ENCODE measurements at regions of chr4 and their contacts with region 1.

Region 1: GRCh38 chr4:39527273-39528060 is at the start of gene UGDH:
- DNase-seq: peak; percentile 91 to 95
- ATAC-seq: peak; percentile 98 to 100 (median 99)
- H3K4me3 ChIP-seq: peak within 1 kb of the TSS; percentile 93
- H3K4me3 Mint-ChIP-seq: peak within 1 kb of the TSS; percentile 96
- H3K27ac ChIP-seq: peak within 1 kb of the TSS; percentile 68
- H3K27ac Mint-ChIP-seq: peak within 1 kb of the TSS; percentile 78 to 92
- H3K4me1 ChIP-seq: peaks cover 18% of the 10 kb centered on the region
- H3K4me1 Mint-ChIP-seq: peaks cover 13 to 20% of the 10 kb centered on the region in 2 donors
- H3K27me3 ChIP-seq: no peaks in the 10 kb centered on the region
- H3K27me3 Mint-ChIP-seq: no peaks in the 10 kb centered on the region
- CTCF ChIP-seq: no peak
- total RNA-seq, gene UGDH: 12.2 to 14.8 (median 13.6) TPM

Region 2: GRCh38 chr4:37826295-37827029 is 1701.0 kb before region 1 on chr4 and contains the start of gene PGM2:
- intact Hi-C with region 1: no loop called
- DNase-seq: peak; percentile 85 to 93
- ATAC-seq: peak; percentile 97 to 99 (median 99)
- H3K4me3 ChIP-seq: peak within 1 kb of the TSS; percentile 95
- H3K4me3 Mint-ChIP-seq: peak within 1 kb of the TSS; percentile 95
- H3K27ac ChIP-seq: peak within 1 kb of the TSS; percentile 69
- H3K27ac Mint-ChIP-seq: peak within 1 kb of the TSS; percentile 84 to 93
- H3K4me1 ChIP-seq: peaks cover 14% of the 10 kb centered on the region
- H3K4me1 Mint-ChIP-seq: peaks cover 40 to 46% of the 10 kb centered on the region in 2 donors
- H3K27me3 ChIP-seq: no peaks in the 10 kb centered on the region
- H3K27me3 Mint-ChIP-seq: no peaks in the 10 kb centered on the region
- CTCF ChIP-seq: no peak
- total RNA-seq, gene PGM2: 18.7 to 31.9 (median 27.1) TPM

Region 3: DNA sequence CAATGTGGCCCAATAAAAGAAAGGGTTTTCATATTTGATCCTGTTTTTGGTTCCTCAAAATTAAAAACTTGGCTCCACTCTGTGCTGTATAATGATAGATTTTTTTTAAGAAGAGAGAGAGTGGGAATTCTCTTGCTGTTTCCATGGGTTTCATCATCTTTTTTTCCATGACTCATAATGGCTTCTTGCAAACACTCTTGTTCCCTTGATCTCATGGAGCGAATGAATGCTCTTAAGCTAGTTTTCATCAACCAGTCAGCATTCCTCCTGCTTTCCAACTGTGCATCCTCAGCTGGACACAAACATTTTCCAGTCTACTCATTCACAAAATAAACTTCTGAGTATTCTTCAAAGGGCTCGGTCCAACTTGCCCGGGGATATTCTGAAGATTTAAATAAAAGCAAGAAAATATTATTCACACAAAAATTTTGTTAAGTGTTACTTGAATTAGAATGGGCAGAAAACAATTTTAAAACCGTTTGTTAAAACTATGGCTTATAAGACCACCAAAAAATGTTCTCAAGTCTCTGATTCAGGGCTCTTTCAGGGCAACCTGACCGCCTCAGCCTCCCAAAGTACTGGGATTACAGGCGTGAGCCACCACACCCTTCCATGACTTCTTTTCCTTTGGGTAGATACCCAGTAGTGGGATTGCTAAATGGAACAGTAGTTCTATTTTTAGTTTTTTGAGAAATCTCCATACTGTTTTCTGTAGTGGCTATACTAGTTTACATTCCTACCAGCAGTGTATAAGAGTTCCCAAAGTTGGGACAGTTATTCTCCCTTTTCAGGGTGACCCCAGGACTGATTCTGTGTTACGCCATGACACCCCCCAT is 560.0 kb before region 1 on chr4:
- intact Hi-C with region 1: no loop called
- DNase-seq: no peak
- ATAC-seq: no peak
- H3K4me3 ChIP-seq: no peak overlapping the region
- H3K4me3 Mint-ChIP-seq: no peak overlapping the region
- H3K27ac ChIP-seq: no peak overlapping the region
- H3K27ac Mint-ChIP-seq: no peak overlapping the region
- H3K4me1 ChIP-seq: no peaks in the 10 kb centered on the region
- H3K4me1 Mint-ChIP-seq: peaks cover 0 to 4% of the 10 kb centered on the region in 2 donors
- H3K27me3 ChIP-seq: no peaks in the 10 kb centered on the region
- H3K27me3 Mint-ChIP-seq: no peaks in the 10 kb centered on the region
- CTCF ChIP-seq: no peak

Region 4: DNA sequence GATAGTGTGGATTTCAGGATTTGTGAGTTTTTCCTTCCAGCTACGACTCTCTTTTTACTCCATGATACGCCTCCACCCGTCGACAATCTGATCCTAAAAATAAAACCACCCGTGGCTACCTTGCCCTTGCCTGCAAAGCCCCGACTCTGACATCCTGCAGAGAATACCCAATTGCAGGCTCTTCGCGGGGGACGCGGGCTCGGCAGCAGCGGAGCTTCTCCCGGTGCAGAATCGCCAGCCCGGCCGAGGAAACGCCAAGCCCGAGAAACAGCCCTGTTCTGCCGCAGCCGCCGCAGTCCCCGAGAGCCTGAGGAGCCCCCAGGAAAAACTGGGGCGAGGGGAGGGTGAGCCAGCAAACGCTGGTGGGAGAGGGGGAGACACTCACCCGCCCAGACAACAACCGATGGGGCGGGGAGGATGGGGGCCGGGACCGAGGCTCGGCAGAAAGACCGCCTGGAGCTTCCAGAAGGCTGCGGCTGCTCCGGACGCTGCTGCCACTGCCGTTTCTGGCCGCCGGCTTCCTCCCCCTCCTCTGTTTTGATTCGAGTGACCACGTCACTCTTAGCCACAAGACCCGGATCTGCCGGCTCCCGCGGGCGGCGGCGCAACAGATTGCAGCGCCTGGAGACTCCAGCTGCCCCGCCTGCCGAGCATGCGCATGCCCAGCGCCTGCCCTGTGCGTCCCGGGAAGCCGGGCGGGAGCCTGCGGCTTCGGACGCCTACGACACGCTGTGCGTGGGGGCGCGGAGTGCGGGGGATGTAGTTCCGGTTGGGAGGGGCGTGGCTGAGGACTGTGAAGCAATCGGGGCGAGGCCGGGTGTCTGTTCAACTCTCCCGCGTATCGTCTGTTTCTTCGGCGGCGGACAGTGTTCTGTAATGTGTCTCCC is 111.1 kb after region 1 on chr4 and contains the start of gene SMIM14:
- intact Hi-C with region 1: loop called (anchors 1 kb)
- DNase-seq: peak; percentile 80 to 93
- ATAC-seq: peak; percentile 76 to 90 (median 80)
- H3K4me3 ChIP-seq: peak within 1 kb of the TSS; percentile 76
- H3K4me3 Mint-ChIP-seq: peak within 1 kb of the TSS; percentile 94
- H3K27ac ChIP-seq: peak within 1 kb of the TSS; percentile 90
- H3K27ac Mint-ChIP-seq: peak within 1 kb of the TSS; percentile 94
- H3K4me1 ChIP-seq: peaks cover 21% of the 10 kb centered on the region
- H3K4me1 Mint-ChIP-seq: peaks cover 39 to 48% of the 10 kb centered on the region in 2 donors
- H3K27me3 ChIP-seq: no peaks in the 10 kb centered on the region
- H3K27me3 Mint-ChIP-seq: no peaks in the 10 kb centered on the region
- CTCF ChIP-seq: no peak
- total RNA-seq, gene SMIM14: 12.6 to 21.8 (median 15.2) TPM